GM10248 (cell line): ENCODE measurements at regions of chr17 and their contacts with region 1.

Region 1: GRCh38 chr17:40622509-40622928 is 25.1 kb downstream of the SMARCE1 start:
- DNase-seq: no peak
- CTCF ChIP-seq: no peak

Region 2: GRCh38 chr17:40564883-40565768 is 57.4 kb before region 1 on chr17 and contains the start of gene CCR7:
- CTCF ChIA-PET with region 1: interaction called, 127 read pairs
- POLR2A ChIA-PET with region 1: interaction called, 7 read pairs
- DNase-seq: peak; percentile 65
- CTCF ChIP-seq: no peak

Region 3: GRCh38 chr17:40598663-40599467 is 23.7 kb before region 1 on chr17:
- CTCF ChIA-PET with region 1: interaction called, 25 read pairs
- POLR2A ChIA-PET with region 1: no interaction called
- DNase-seq: peak; percentile 74
- CTCF ChIP-seq: no peak

Region 4: DNA sequence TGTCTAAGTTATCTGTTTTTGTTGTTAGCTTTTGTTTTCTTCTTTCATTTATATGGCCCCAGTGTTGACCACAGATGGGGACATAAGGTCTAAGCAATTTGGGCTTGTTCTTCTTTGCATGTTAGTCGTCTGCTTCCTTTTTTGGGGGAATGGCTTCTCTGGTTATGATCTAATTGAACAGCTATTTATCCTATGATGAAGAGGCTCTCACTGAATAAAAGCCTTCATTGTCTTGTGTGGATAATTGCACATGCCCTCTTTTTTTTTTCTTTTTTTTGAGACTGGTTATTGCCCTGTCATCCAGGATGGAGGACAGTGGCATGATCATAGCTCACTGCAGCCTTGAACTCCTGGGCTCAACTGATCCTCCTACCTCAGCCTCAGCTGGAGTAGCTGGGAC is 11.4 kb after region 1 on chr17:
- CTCF ChIA-PET with region 1: interaction called, 73 read pairs
- POLR2A ChIA-PET with region 1: no interaction called
- DNase-seq: no peak
- CTCF ChIP-seq: no peak

Region 5: DNA sequence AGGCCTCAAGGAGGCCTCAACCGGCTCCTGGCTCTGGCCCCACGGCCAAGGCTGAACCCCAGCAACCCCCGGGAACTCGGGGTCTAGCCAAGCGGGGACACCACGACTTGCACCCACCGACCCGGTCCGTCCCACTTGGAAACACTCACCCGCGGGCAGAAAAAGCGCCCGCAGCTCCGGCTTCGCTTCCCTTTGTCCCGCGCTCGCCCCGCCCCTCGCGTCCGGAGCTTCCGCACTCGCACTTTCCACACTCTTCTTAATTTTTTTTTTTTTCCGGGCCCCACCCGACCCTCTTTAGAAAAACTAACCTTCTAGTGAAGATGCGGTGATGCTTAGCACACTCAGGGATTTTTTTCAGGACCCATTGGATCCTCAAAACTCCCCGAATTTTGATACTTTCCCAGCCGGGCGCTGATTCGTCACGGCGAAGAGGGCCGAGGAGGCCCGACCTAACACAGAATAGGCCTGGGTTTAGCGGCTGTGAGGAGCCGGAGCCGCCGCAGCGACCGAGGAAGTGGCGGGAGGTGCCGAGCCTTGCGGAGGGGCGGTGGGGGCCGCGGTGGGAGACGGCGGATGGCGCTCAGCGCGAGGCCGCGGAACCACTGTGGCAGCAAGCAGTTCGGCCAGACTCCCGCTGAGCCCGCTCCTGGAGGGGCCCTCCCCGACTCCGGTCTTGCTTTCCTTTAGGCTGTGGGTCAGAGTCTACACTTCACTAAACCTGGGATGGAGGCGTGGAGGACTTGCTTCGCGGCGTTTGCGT is 25.3 kb after region 1 on chr17 and contains the start of gene SMARCE1:
- CTCF ChIA-PET with region 1: interaction called, 27 read pairs
- POLR2A ChIA-PET with region 1: no interaction called
- DNase-seq: peak; percentile 81
- CTCF ChIP-seq: no peak